ENCODE measurements at regions of chr22 and their contacts with region 1.

Region 1: GRCh38 chr22:50209893-50210292 is 9.1 kb downstream of the SELENOO start:
- DNase-seq: peak; percentile 73
- ATAC-seq: peak; percentile 27 to 41

Region 2: DNA sequence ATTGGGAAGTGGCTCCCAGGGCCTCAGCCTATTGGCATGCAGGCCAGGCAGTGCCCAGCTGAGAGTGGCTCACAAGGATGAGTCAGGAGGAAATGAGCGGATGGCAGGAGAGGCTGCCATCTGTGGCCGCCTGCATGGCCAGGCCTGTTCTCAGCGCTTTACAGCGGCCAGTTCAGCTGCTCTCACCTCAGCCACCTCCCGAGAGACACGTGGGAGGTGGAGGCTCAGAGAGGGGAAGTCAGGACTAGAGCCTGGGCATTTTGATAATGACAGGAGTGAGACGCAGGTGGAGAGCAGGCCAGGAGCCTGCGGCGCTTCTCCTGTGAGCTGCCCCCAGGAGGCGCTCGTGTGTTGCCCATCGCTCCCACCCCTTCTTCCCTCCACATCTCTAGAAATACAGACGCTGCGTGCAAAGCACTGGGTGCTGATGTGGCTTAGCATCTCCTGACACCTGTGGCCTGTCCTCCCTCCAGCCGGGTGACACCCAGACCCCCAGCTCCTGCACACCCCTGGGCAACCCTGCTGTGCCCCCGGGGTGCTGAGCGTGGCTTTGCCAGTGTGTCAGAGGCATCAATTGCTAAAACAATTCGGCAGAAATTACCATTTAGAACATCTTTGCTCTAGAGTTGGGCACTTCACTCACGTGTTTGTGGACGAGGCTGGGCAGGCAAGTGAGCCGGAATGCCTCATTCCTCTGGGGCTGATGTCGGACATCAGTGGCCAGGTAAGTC is 60.7 kb before region 1 on chr22:
- intact Hi-C with region 1: loop called (anchors 2 to 5 kb)
- DNase-seq: peak; percentile 42
- ATAC-seq: peak; percentile 60 to 68

Measured in left cardiac atrium (tissue), 4 donors.